CD4-positive, alpha-beta T cell (primary cell): ENCODE measurements at regions of chr17 and their contacts with region 1.

Region 1: GRCh38 chr17:68247445-68248198 is at the start of gene AMZ2:
- DNase-seq: peak; percentile 92 to 99 (median 96)
- ATAC-seq: peak; percentile 89
- H3K4me3 ChIP-seq: peak within 1 kb of the TSS; percentile 92
- H3K4me3 Mint-ChIP-seq: peak within 1 kb of the TSS; percentile 94
- H3K27ac ChIP-seq: peak within 1 kb of the TSS; percentile 97
- H3K27ac Mint-ChIP-seq: peak within 1 kb of the TSS; percentile 93
- H3K4me1 ChIP-seq: peaks cover 37% of the 10 kb centered on the region
- H3K4me1 Mint-ChIP-seq: peaks cover 52% of the 10 kb centered on the region
- H3K27me3 ChIP-seq: no peaks in the 10 kb centered on the region
- H3K27me3 Mint-ChIP-seq: no peaks in the 10 kb centered on the region
- CTCF ChIP-seq: no peak
- total RNA-seq, gene AMZ2: 63.0 to 64.9 TPM

Region 2: DNA sequence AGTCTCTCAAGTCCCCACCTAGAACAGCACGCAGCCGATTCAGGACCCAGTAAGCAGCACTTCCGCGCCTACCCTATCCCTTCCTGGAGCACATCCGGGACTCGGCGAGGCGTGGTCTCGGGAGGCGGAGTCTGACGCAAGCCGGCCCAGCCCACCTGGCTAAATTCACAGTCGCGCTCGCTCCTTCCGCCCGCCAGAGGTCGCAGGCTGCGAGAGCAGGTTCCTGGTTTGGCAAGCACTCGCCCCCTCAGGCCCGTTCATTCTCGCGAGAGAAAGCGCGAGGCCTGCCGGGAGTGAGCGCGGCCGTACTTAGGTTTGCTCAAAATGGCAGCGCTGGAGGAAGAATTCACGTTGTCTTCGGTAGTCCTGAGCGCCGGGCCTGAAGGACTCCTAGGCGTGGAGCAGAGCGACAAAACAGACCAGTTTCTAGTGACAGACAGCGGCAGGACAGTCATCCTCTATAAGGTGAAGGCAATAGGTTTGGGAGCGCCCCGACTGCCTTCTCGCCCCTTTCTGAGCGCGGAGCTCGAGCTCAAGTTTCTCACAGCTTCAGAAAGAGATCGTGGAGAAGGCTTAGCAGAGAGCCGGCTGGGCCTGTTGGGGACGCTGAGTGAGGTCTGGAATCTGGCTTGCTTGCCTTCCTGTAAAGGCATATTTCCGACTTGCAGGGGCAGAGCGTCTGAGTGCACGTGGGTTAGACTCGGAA is 529.8 kb before region 1 on chr17 and contains the start of gene NOL11:
- CTCF ChIA-PET with region 1: no interaction called
- POLR2A ChIA-PET with region 1: no interaction called
- intact Hi-C with region 1: loop called in 1 of 2 experiments (anchors 10 kb)
- DNase-seq: peak; percentile 99 to 100 (median 99)
- ATAC-seq: peak; percentile 91
- H3K4me3 ChIP-seq: peak within 1 kb of the TSS; percentile 81
- H3K4me3 Mint-ChIP-seq: peak within 1 kb of the TSS; percentile 97
- H3K27ac ChIP-seq: peak within 1 kb of the TSS; percentile 91 to 95
- H3K27ac Mint-ChIP-seq: peak within 1 kb of the TSS; percentile 95
- H3K4me1 ChIP-seq: peaks cover 20% of the 10 kb centered on the region
- H3K4me1 Mint-ChIP-seq: peaks cover 30% of the 10 kb centered on the region
- H3K27me3 ChIP-seq: no peaks in the 10 kb centered on the region
- H3K27me3 Mint-ChIP-seq: no peaks in the 10 kb centered on the region
- CTCF ChIP-seq: peak; percentile 83
- total RNA-seq, gene NOL11: 89.1 to 91.2 TPM

Region 3: DNA sequence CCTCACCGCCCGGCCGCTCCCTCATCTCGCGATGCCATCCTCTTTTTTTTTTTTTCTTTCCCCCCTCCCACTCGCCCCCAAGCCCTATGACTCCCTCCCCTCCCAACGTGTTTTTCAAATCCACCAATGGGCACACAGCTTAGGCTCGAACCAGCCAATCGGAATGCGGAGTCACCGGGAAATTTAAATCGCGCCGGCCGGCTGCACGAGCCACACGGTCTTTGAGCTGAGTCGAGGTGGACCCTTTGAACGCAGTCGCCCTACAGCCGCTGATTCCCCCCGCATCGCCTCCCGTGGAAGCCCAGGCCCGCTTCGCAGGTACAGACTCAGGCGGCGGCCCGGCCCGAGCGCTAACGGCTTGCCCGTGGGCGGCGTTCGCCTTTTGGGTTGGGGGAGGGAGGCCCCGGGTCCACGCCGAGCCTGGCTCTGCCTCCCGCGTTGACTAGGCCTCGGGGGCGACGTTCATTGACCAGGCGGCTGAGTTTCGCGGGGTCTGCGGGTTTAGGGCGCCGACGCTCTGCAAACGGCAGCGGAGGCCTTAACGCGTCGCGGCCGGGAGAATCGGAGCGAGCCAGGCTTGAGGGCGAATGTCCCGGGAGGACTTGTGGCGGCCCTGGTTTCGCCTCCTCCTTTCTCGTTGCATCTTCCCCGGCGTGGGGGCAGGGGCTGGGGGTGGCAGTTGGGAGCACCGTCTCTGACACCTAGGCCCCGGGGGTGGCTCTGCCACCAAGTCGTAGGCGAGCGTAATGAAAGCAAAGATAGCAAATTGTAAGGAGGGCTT is 211.9 kb before region 1 on chr17 and contains the start of gene KPNA2:
- CTCF ChIA-PET with region 1: no interaction called
- POLR2A ChIA-PET with region 1: no interaction called
- intact Hi-C with region 1: loop called in 1 of 2 experiments (anchors 5 kb)
- DNase-seq: peak; percentile 77 to 97 (median 87)
- ATAC-seq: peak; percentile 83
- H3K4me3 ChIP-seq: peak within 1 kb of the TSS; percentile 90
- H3K4me3 Mint-ChIP-seq: peak within 1 kb of the TSS; percentile 98
- H3K27ac ChIP-seq: peak within 1 kb of the TSS; percentile 75 to 79
- H3K27ac Mint-ChIP-seq: peak within 1 kb of the TSS; percentile 93
- H3K4me1 ChIP-seq: peaks cover 7% of the 10 kb centered on the region
- H3K4me1 Mint-ChIP-seq: peaks cover 17% of the 10 kb centered on the region
- H3K27me3 ChIP-seq: no peaks in the 10 kb centered on the region
- H3K27me3 Mint-ChIP-seq: no peaks in the 10 kb centered on the region
- CTCF ChIP-seq: no peak
- total RNA-seq, gene KPNA2: 64.4 to 65.9 TPM

Region 4: GRCh38 chr17:68184816-68185436 is 62.7 kb before region 1 on chr17:
- CTCF ChIA-PET with region 1: interaction called, 3 read pairs
- POLR2A ChIA-PET with region 1: interaction called, 13 read pairs
- intact Hi-C with region 1: loop called in 1 of 2 experiments (anchors 5 kb)
- DNase-seq: peak in 12 of 14 experiments; percentile 32 to 87 (median 49)
- ATAC-seq: peak; percentile 63
- H3K4me3 ChIP-seq: peak overlapping the region; percentile 65
- H3K4me3 Mint-ChIP-seq: peak overlapping the region; percentile 74
- H3K27ac ChIP-seq: peak overlapping the region; percentile 67 to 76
- H3K27ac Mint-ChIP-seq: peak overlapping the region; percentile 83
- H3K4me1 ChIP-seq: peaks cover 62% of the 10 kb centered on the region
- H3K4me1 Mint-ChIP-seq: peaks cover 60% of the 10 kb centered on the region
- H3K27me3 ChIP-seq: no peaks in the 10 kb centered on the region
- H3K27me3 Mint-ChIP-seq: no peaks in the 10 kb centered on the region
- CTCF ChIP-seq: no peak

Region 5: DNA sequence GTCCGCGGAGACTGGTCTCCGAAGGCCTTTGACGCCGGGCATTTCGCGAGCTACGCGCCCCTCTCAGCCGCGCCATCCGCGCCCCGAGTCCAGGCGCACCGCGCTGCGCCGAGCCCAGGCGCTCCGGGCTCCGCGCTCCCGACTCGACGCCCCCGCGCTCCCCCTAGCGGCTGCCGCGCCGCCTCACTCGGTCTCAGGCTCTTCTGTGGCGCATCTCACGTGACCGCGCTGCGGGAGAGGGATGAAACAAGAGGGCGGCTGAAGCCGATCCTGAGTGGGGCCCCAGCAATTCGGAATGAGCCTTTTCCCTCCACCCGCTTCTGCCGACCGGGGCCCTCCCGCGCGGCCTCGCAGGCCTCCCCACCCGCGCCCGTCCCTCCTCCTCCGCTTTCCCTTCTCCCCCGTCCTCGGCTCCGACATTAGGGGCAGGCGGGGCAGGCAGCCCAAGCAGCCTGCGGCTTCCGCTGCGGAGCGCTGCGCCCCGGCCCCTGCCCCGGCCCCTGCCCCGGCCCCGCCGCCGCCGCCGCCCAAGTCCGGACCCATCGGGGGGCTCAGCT is 42.3 kb before region 1 on chr17:
- CTCF ChIA-PET with region 1: interaction called, 8 read pairs
- POLR2A ChIA-PET with region 1: interaction called, 65 read pairs
- intact Hi-C with region 1: loop called (anchors 2 to 5 kb)
- DNase-seq: peak; percentile 82 to 96 (median 92)
- ATAC-seq: peak; percentile 73
- H3K4me3 ChIP-seq: peak overlapping the region; percentile 70
- H3K4me3 Mint-ChIP-seq: peak overlapping the region; percentile 94
- H3K27ac ChIP-seq: peak overlapping the region; percentile 58 to 76
- H3K27ac Mint-ChIP-seq: peak overlapping the region; percentile 84
- H3K4me1 ChIP-seq: peaks cover 33% of the 10 kb centered on the region
- H3K4me1 Mint-ChIP-seq: peaks cover 36% of the 10 kb centered on the region
- H3K27me3 ChIP-seq: no peaks in the 10 kb centered on the region
- H3K27me3 Mint-ChIP-seq: peaks cover 5% of the 10 kb centered on the region
- CTCF ChIP-seq: peak; percentile 87

Region 6: GRCh38 chr17:68277807-68278206 is 30.2 kb after region 1 on chr17:
- CTCF ChIA-PET with region 1: no interaction called
- POLR2A ChIA-PET with region 1: no interaction called
- intact Hi-C with region 1: no loop called
- DNase-seq: no peak
- ATAC-seq: no peak
- H3K4me3 ChIP-seq: no peak overlapping the region
- H3K4me3 Mint-ChIP-seq: no peak overlapping the region
- H3K27ac ChIP-seq: no peak overlapping the region
- H3K27ac Mint-ChIP-seq: no peak overlapping the region
- H3K4me1 ChIP-seq: no peaks in the 10 kb centered on the region
- H3K4me1 Mint-ChIP-seq: peaks cover 17% of the 10 kb centered on the region
- H3K27me3 ChIP-seq: no peaks in the 10 kb centered on the region
- H3K27me3 Mint-ChIP-seq: no peaks in the 10 kb centered on the region
- CTCF ChIP-seq: no peak

Region 7: DNA sequence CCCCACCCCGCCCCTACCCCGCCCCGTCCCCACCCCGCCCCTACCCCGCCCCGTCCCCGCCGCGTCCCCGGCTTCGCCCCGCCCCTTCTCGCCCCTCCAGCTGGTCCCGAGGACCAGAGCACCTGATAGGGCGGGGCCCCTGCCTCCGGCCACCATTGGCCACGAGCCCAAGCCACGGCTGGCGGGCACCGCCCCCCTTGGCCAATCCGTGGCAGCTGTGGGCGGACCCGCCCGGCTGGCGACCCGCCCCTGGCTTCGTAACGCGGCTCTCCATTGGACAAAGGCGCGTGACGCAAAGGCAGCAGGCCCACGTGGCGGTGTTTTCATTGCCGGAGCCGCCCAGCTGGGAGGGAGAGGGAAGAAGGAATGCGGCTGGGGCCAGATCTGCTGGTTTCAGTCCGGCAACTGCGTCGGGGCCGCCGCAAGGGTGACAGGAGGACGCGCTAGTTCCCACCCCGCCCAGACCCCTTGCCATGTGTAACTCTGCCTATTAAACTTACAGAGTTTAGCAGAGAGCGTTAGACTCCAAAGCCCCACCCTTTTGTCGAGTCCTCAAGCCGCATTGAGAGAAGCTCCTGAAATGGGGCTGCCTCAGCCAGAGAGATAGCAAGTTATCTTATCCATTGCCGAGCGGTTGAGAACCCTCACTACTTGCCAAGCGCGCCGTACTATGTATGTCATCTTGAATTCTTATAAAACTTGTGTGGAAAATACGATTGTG is 210.1 kb after region 1 on chr17:
- CTCF ChIA-PET with region 1: no interaction called
- POLR2A ChIA-PET with region 1: interaction called, 24 read pairs
- intact Hi-C with region 1: no loop called
- DNase-seq: peak; percentile 95 to 99 (median 98)
- ATAC-seq: peak; percentile 93
- H3K4me3 ChIP-seq: peak overlapping the region; percentile 77
- H3K4me3 Mint-ChIP-seq: peak overlapping the region; percentile 82
- H3K27ac ChIP-seq: peak overlapping the region; percentile 43 to 59
- H3K27ac Mint-ChIP-seq: peak overlapping the region; percentile 81
- H3K4me1 ChIP-seq: peaks cover 50% of the 10 kb centered on the region
- H3K4me1 Mint-ChIP-seq: peaks cover 51% of the 10 kb centered on the region
- H3K27me3 ChIP-seq: no peaks in the 10 kb centered on the region
- H3K27me3 Mint-ChIP-seq: no peaks in the 10 kb centered on the region
- CTCF ChIP-seq: no peak

Region 8: DNA sequence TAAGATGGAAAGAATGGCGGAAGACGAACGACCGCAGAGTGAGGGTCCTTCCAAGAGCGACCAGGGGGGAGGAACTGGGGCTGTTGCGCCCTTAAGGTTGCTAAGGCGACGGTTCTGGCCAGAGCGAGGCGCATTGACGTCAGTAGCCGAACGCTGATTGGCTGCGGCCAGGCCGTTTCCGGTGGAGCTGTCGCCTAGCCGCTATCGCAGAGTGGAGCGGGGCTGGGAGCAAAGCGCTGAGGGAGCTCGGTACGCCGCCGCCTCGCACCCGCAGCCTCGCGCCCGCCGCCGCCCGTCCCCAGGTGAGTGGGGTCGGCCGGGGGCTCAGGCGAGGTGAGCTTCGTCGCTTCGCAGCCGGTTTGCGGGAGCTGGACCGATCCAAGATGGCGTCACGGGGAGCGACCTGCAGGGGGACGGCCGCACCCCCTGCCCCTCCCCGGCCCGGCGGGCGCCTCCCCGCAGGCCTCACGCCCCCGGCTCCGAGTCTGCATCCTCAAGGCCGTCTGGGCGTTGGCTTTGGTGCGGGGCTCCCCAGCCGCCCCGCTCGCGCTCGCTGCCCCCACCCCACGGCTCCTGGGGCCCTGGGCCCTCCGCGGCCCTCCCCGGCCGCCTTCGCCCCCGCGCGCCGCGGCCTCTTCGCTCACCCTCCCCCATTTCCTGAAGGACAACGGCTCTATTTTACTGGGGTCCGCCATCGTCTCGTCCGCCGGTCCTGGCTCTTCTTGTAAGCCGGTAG is 264.8 kb after region 1 on chr17 and contains the start of gene PRKAR1A:
- CTCF ChIA-PET with region 1: interaction called, 3 read pairs
- POLR2A ChIA-PET with region 1: interaction called, 5 read pairs
- intact Hi-C with region 1: loop called in 1 of 2 experiments (anchors 5 kb)
- DNase-seq: peak; percentile 83 to 97 (median 90)
- ATAC-seq: peak; percentile 82
- H3K4me3 ChIP-seq: peak within 1 kb of the TSS; percentile 80
- H3K4me3 Mint-ChIP-seq: peak within 1 kb of the TSS; percentile 100
- H3K27ac ChIP-seq: peak within 1 kb of the TSS; percentile 98
- H3K27ac Mint-ChIP-seq: peak within 1 kb of the TSS; percentile 99
- H3K4me1 ChIP-seq: peaks cover 17% of the 10 kb centered on the region
- H3K4me1 Mint-ChIP-seq: peaks cover 50% of the 10 kb centered on the region
- H3K27me3 ChIP-seq: no peaks in the 10 kb centered on the region
- H3K27me3 Mint-ChIP-seq: no peaks in the 10 kb centered on the region
- CTCF ChIP-seq: no peak
- total RNA-seq, gene PRKAR1A: 88.8 to 89.1 TPM